ENCODE measurements at regions of chr7 and their contacts with region 1.

Region 1: DNA sequence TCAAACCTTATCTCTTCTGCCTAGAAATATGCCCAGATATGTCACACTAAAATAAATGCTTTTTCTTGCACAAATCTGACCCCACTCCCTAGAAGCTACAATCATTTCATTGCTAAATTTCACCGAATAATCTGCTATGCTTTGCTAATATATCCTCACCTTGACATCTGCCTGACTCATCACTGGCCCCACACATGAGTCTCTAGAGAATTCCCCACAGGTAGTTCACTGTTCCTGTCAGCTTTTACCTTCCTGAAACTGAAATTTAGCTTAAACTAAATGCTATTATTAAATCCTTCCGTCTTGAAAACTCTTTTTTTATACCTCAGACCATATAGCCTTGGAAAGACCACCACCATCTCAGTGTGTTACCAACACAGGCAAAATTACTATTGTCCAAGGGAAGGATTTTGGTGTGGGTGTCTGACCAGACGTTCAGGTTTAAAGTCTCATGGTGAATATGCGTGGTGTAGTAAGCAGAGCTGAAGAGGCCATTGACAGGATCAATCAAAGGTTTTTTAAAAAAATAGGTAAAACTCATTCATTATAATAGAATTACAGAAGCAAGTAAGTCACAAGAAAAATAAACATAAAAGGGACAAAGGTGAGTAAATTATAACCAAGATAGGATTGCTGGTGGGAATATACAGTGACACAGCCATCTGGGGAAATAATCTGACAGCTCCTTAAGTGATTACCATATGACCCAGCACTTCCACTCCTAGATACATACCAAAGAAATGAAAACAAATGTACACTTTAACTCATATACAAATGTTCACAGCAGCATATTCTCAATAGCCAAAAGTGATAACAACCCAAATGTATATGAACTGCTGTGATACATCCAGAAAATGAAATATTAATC is 173.5 kb downstream of the KMT2E start:
- DNase-seq: peak; percentile 72
- H3K4me3 ChIP-seq: no peak overlapping the region
- H3K27ac ChIP-seq: peak overlapping the region; percentile 99
- H3K4me1 ChIP-seq: peaks cover 44% of the 10 kb centered on the region
- H3K27me3 ChIP-seq: no peaks in the 10 kb centered on the region
- CTCF ChIP-seq: no peak

Region 2: GRCh38 chr7:105118612-105119600 is 68.6 kb before region 1 on chr7:
- CTCF ChIA-PET with region 1: no interaction called
- dilution Hi-C with region 1: no loop called
- in situ Hi-C with region 1: no loop called
- intact Hi-C with region 1: no loop called
- DNase-seq: no peak
- H3K4me3 ChIP-seq: no peak overlapping the region
- H3K27ac ChIP-seq: no peak overlapping the region
- H3K4me1 ChIP-seq: no peaks in the 10 kb centered on the region
- H3K27me3 ChIP-seq: no peaks in the 10 kb centered on the region
- CTCF ChIP-seq: no peak

Region 3: GRCh38 chr7:105219780-105220160 is 32.2 kb after region 1 on chr7:
- CTCF ChIA-PET with region 1: no interaction called
- dilution Hi-C with region 1: no loop called
- in situ Hi-C with region 1: no loop called
- intact Hi-C with region 1: loop called (anchors 2 kb)
- DNase-seq: peak; percentile 89
- H3K4me3 ChIP-seq: no peak overlapping the region
- H3K27ac ChIP-seq: peak overlapping the region; percentile 99
- H3K4me1 ChIP-seq: peaks cover 38% of the 10 kb centered on the region
- H3K27me3 ChIP-seq: no peaks in the 10 kb centered on the region
- CTCF ChIP-seq: no peak

Region 4: DNA sequence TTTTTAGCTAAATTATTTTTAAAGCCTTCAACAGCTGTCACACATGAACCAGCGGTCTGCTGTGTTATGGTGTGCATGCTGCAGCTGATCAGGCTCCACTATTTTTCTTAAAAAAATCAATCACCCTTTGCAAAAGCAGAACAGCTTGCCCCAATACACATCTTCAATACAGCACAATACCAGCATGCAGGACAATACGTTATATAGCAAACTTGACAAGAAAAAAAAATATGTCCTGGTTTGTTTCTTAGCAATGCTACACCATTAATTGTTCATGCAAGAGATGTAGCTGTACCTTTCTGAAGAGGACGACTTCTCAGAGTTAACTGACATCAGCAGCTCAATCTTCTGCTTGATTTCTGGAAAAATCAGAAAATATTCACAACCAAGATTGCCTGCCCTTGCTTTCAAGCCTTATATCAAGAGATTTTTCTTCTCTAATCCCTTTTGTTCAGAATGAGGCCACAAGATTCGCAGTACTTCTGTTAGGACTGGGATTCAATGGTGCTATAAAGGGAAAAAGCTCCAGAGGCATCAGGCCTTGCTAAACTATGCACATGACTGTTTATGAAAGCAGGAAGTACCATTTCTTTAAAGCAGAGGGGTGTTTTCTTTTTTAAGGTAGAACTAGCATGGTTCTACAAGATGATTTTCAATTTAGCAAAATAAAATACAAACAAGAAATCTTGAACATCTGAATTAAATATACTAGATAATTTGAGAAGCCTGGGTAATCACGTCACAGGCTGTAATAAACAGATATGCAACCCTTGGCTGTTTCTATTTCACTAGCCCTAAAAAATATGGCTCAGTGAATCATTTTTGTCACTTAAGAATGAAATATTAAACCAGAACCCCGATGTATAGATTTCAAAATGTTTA is 81.2 kb after region 1 on chr7:
- CTCF ChIA-PET with region 1: no interaction called
- dilution Hi-C with region 1: no loop called
- in situ Hi-C with region 1: no loop called
- intact Hi-C with region 1: loop called (anchors 2 kb)
- DNase-seq: peak; percentile 62
- H3K4me3 ChIP-seq: peak overlapping the region; percentile 67 to 79 (median 69)
- H3K27ac ChIP-seq: peak overlapping the region; percentile 94
- H3K4me1 ChIP-seq: no peaks in the 10 kb centered on the region
- H3K27me3 ChIP-seq: no peaks in the 10 kb centered on the region
- CTCF ChIP-seq: no peak

Measured in mammary epithelial cell (primary cell).